ENCODE measurements at regions of chrX and their contacts with region 1.

Region 1: DNA sequence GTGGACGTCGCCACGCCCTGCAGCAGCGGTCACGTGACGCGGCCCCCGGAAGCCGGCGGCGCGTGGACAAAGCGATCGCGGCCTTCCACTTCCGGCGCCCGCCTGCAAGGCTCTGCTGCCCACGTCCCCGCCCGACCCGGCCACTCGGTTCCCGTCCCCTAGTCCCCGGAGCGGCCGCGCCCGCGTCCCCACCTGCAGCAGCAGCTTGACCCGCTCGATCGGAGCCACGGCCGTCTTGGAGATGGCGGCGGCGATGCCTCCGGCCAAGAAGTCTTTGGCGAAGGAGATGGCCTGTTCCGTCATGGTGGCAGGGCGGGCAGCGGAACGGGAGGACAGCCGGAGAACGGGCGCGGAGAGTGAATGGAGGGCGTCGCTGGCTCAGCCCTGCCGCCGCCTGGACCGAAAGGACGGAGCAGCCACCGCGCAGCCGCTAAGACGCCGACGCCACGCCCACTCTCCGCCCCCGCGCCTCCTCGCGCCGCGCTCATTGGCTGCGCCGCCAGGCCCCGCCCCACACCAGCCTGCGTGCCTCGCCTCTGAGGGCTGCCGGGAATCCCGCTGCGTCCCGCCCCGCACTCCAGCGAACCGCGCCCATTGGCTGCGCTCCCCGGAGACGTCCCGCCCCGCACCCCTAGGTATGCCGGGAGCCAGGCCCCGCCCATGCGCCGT is at the start of gene SLC25A6:
- DNase-seq: peak; percentile 98 to 99 (median 99)
- H3K4me3 ChIP-seq: peak within 1 kb of the TSS; percentile 59 to 99 (median 80)
- H3K27ac ChIP-seq: peak within 1 kb of the TSS; percentile 98 to 100 (median 99)
- H3K4me1 ChIP-seq: peaks cover 14 to 16% of the 10 kb centered on the region in 2 donors
- H3K27me3 ChIP-seq: no peaks in the 10 kb centered on the region
- CTCF ChIP-seq: peak in 3 of 6 experiments; percentile 9 to 54 (median 37)
- POLR2A ChIP-seq: peak; percentile 87 to 90
- total RNA-seq, gene SLC25A6: 183 to 509 (median 387) TPM

Region 2: DNA sequence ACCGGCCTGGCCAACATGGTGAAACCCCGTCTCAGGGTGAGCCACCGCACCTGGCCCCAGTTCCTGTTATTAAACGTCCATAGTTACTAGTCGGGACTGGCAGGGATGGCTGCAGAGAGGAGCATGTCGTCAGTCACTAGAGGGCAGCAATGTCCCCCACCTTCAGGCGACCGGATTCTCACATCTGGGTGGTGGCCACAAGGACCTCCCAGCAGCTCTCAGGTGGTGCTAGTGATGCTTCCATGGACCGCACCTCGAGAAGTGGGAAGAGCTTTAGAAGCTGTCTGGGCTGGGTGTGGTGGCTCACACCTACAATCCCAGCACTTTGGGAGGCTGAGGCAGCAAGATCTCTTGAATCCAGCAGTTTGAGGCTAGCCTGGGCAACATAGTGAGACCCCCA is 68.5 kb before region 1 on chrX:
- intact Hi-C with region 1: loop called in 1 of 2 experiments (anchors 10 kb)
- DNase-seq: peak; percentile 28 to 74 (median 59)
- H3K4me3 ChIP-seq: no peak overlapping the region
- H3K27ac ChIP-seq: no peak overlapping the region
- H3K4me1 ChIP-seq: no peaks in the 10 kb centered on the region
- H3K27me3 ChIP-seq: no peaks in the 10 kb centered on the region
- CTCF ChIP-seq: peak; percentile 3 to 43 (median 30)
- POLR2A ChIP-seq: no peak

Region 3: DNA sequence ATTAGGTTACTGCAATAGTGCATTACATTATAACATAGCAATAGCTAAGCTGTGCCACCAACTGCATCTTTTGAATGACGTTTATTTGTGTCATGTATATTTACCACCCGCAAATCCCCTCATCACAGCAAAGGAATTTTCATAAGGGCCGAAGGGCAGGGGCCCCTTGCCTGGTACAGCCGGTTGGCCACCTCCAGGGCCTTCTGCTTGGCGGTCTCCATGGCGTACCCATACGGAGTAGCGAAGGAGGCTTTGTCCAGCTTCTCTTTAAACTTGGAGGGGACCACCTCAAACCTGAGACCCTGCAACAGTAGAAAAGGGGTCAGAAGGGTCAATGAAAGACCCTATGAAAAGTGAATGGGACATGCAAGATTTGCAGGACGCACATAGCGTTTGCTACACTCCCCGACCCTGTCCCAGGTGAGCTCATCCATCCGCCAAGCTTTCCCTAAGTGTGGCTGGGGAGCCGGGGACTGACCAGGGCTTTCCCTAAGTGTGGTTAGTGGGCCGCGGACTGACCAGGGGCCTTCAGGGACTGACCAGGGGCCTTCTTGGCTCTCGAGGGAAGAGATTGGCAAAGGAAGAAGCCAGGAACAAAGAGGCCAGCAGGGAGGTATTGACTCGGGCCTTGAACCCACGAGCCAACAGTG is 50.3 kb after region 1 on chrX:
- intact Hi-C with region 1: loop called in 1 of 2 experiments (anchors 10 kb)
- DNase-seq: peak in 5 of 7 donors; percentile 4 to 42 (median 4)
- H3K4me3 ChIP-seq: no peak overlapping the region
- H3K27ac ChIP-seq: no peak overlapping the region
- H3K4me1 ChIP-seq: no peaks in the 10 kb centered on the region
- H3K27me3 ChIP-seq: no peaks in the 10 kb centered on the region
- CTCF ChIP-seq: no peak
- POLR2A ChIP-seq: no peak

Region 4: DNA sequence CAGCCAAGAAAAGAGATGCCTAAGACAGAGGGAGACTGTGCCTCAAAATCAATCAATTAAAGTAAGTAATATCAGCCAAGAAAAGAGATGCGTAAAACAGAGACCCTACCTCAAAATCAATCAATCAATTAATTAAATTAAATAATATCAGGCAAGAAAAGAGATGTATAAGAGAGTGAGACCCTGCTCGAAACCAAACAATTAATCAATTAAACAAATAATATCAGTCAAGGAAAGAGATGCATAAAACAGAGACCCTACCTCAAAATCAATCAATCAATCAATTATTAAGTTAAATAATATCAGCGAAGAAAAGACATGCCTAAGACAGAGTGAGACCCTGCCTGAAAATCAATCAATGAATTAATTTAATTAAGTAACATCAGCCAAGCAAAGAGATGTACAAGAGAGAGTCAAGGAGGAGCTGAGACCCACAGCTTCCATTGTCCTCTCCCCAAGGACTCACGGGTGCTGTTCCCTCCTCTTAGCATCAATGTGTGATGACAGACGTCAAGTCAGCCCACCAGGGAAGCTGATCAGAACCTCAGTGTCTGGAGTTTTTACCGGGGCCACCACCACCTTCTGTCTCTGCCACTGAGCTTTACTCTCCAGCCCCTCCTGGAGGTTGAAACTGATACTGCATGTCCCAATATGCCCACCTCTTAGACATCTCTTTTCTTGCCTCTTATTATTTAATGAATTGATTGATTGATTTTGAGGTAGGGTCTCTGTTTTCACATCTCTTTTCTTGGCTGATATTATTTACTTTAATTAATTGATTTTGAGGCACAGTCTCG is 189.1 kb after region 1 on chrX:
- intact Hi-C with region 1: no loop called
- DNase-seq: peak; percentile 51 to 82 (median 61)
- H3K4me3 ChIP-seq: no peak overlapping the region
- H3K27ac ChIP-seq: no peak overlapping the region
- H3K4me1 ChIP-seq: no peaks in the 10 kb centered on the region
- H3K27me3 ChIP-seq: no peaks in the 10 kb centered on the region
- CTCF ChIP-seq: peak; percentile 67 to 91 (median 82)
- POLR2A ChIP-seq: no peak

Measured in adrenal gland (tissue), 19 donors.